ENCODE measurements at regions of chr9 and their contacts with region 1.

Region 1: GRCh38 chr9:18473652-18474279 is at the start of gene ADAMTSL1:
- DNase-seq: no peak
- total RNA-seq, gene ADAMTSL1: 2.1 TPM

Region 2: DNA sequence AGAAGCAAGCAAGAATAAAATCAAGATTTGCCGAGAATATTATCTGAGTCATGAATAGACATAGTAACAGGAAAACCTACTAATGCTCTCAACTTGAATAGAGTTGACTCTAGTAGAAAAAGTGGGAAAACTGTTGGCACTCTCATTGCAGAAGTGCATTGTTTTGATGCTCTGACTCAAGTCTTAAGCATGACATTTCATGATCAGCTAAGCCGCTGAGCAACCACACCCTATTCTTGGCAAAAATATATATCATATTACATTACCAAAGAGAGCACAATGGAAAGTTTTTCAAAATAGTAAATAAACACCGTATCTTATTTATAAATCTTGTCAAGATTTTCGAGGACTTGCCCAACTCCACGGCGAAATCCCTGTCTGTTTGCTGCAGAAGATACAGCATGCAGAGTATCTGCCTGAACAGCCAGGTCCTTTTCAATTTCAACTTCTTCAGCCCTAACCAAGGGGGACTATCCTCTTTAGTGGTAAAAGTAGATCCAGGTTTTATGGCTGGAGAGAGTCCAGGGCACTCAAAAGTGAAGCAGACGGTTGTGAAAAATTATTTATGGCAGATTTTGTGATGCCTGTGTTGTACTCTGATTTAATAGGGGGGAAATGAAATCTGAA is 13.7 kb before region 1 on chr9:
- intact Hi-C with region 1: no loop called
- DNase-seq: no peak

Region 3: GRCh38 chr9:18499980-18500379 is 26.2 kb after region 1 on chr9:
- intact Hi-C with region 1: loop called (anchors 2 kb)
- DNase-seq: no peak

Region 4: GRCh38 chr9:18668944-18669343 is 195.2 kb after region 1 on chr9:
- intact Hi-C with region 1: no loop called
- DNase-seq: no peak

Region 5: GRCh38 chr9:18786911-18787650 is 313.3 kb after region 1 on chr9:
- intact Hi-C with region 1: loop called (anchors 10 kb)
- DNase-seq: no peak

Measured in cardiac septum (tissue), 1 donor.